ENCODE measurements at regions of chr15 and their contacts with region 1.

Region 1: GRCh38 chr15:78108299-78109084 is 16.1 kb downstream of the SH2D7 start:
- DNase-seq: peak; percentile 75 to 89 (median 77)
- H3K4me3 ChIP-seq: no peak overlapping the region
- H3K4me3 Mint-ChIP-seq: no peak overlapping the region
- H3K27ac ChIP-seq: no peak overlapping the region
- H3K27ac Mint-ChIP-seq: peak overlapping the region in 4 of 8 donors; percentile 31 to 86 (median 55)
- H3K4me1 ChIP-seq: peaks cover 32% of the 10 kb centered on the region
- H3K4me1 Mint-ChIP-seq: peaks cover 34 to 45% (median 34%) of the 10 kb centered on the region in 3 donors
- H3K27me3 ChIP-seq: no peaks in the 10 kb centered on the region
- H3K27me3 Mint-ChIP-seq: peaks cover 0 to 3% of the 10 kb centered on the region in 2 donors

Region 2: GRCh38 chr15:77966540-77967290 is 141.8 kb before region 1 on chr15:
- CTCF ChIA-PET with region 1: interaction called, 146 read pairs
- POLR2A ChIA-PET with region 1: no interaction called
- DNase-seq: peak; percentile 30 to 67 (median 39)
- H3K4me3 ChIP-seq: no peak overlapping the region
- H3K4me3 Mint-ChIP-seq: no peak overlapping the region
- H3K27ac ChIP-seq: no peak overlapping the region
- H3K27ac Mint-ChIP-seq: no peak overlapping the region
- H3K4me1 ChIP-seq: no peaks in the 10 kb centered on the region
- H3K4me1 Mint-ChIP-seq: no peaks in the 10 kb centered on the region
- H3K27me3 ChIP-seq: no peaks in the 10 kb centered on the region
- H3K27me3 Mint-ChIP-seq: peaks cover 0 to 3% of the 10 kb centered on the region in 2 donors

Region 3: DNA sequence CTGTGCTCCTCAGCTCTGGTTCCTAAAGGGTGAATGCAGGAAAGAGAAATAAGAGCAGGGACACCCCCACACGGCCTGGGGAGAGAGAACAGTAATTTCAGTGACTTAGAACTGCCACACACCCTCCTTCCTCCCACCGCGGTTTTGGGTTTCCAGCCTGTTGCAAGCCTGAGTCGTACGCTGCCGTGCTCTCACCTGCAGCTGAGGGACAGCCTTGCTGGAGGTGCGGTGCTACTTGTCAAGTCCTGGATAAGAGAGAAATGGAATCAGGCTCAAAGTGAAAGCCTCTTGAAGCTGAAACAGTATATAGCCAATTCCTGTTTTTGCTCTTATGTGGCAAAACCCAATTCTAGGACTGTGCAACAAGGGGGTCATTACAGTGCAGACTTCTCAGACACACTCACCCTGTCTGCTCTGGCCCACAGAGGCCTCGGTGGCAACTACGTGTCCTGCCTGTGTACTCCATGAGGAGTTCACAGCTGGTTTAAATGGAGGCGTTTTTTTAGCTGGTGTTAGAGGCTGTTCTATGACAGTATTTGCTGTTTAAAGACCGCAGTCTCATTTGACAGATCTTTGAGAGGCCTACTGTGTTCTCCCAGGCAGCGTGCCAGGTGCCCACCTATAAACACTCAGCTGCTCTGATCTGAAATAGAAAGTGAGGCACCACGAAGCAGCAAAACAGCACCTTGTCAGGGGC is 73.8 kb before region 1 on chr15:
- CTCF ChIA-PET with region 1: interaction called, 31 read pairs
- POLR2A ChIA-PET with region 1: interaction called, 4 read pairs
- DNase-seq: peak; percentile 63 to 90 (median 78)
- H3K4me3 ChIP-seq: peak overlapping the region; percentile 38
- H3K4me3 Mint-ChIP-seq: peak overlapping the region; percentile 57 to 84 (median 78)
- H3K27ac ChIP-seq: peak overlapping the region; percentile 75
- H3K27ac Mint-ChIP-seq: peak overlapping the region; percentile 73 to 99 (median 96)
- H3K4me1 ChIP-seq: peaks cover 64% of the 10 kb centered on the region
- H3K4me1 Mint-ChIP-seq: peaks cover 84 to 95% (median 88%) of the 10 kb centered on the region in 3 donors
- H3K27me3 ChIP-seq: no peaks in the 10 kb centered on the region
- H3K27me3 Mint-ChIP-seq: peaks cover 0 to 2% of the 10 kb centered on the region in 2 donors

Region 4: GRCh38 chr15:78093242-78094020 is 15.1 kb before region 1 on chr15:
- CTCF ChIA-PET with region 1: interaction called, 10 read pairs
- POLR2A ChIA-PET with region 1: no interaction called
- DNase-seq: peak in 1 of 5 donors; percentile 14
- H3K4me3 ChIP-seq: no peak overlapping the region
- H3K4me3 Mint-ChIP-seq: no peak overlapping the region
- H3K27ac ChIP-seq: no peak overlapping the region
- H3K27ac Mint-ChIP-seq: no peak overlapping the region
- H3K4me1 ChIP-seq: no peaks in the 10 kb centered on the region
- H3K4me1 Mint-ChIP-seq: peaks cover 0 to 19% (median 0%) of the 10 kb centered on the region in 3 donors
- H3K27me3 ChIP-seq: no peaks in the 10 kb centered on the region
- H3K27me3 Mint-ChIP-seq: peaks cover 0 to 6% of the 10 kb centered on the region in 2 donors

Region 5: GRCh38 chr15:78167227-78167888 is 58.9 kb after region 1 on chr15:
- CTCF ChIA-PET with region 1: no interaction called
- POLR2A ChIA-PET with region 1: no interaction called
- DNase-seq: peak in 1 of 5 donors; percentile 13
- H3K4me3 ChIP-seq: no peak overlapping the region
- H3K4me3 Mint-ChIP-seq: peak overlapping the region; percentile 2 to 48 (median 32)
- H3K27ac ChIP-seq: no peak overlapping the region
- H3K27ac Mint-ChIP-seq: peak overlapping the region in 5 of 8 donors; percentile 6 to 59 (median 26)
- H3K4me1 ChIP-seq: peaks cover 13% of the 10 kb centered on the region
- H3K4me1 Mint-ChIP-seq: peaks cover 12 to 17% (median 15%) of the 10 kb centered on the region in 3 donors
- H3K27me3 ChIP-seq: no peaks in the 10 kb centered on the region
- H3K27me3 Mint-ChIP-seq: no peaks in the 10 kb centered on the region

Region 6: GRCh38 chr15:78177447-78177873 is 69.0 kb after region 1 on chr15:
- CTCF ChIA-PET with region 1: no interaction called
- POLR2A ChIA-PET with region 1: no interaction called
- DNase-seq: peak in 2 of 5 donors; percentile 16 to 56
- H3K4me3 ChIP-seq: no peak overlapping the region
- H3K4me3 Mint-ChIP-seq: no peak overlapping the region
- H3K27ac ChIP-seq: no peak overlapping the region
- H3K27ac Mint-ChIP-seq: no peak overlapping the region
- H3K4me1 ChIP-seq: peaks cover 16% of the 10 kb centered on the region
- H3K4me1 Mint-ChIP-seq: peaks cover 19 to 23% (median 20%) of the 10 kb centered on the region in 3 donors
- H3K27me3 ChIP-seq: no peaks in the 10 kb centered on the region
- H3K27me3 Mint-ChIP-seq: no peaks in the 10 kb centered on the region

Region 7: GRCh38 chr15:78195735-78196201 is 87.3 kb after region 1 on chr15:
- CTCF ChIA-PET with region 1: interaction called, 101 read pairs
- POLR2A ChIA-PET with region 1: no interaction called
- DNase-seq: peak; percentile 8 to 56 (median 46)
- H3K4me3 ChIP-seq: no peak overlapping the region
- H3K4me3 Mint-ChIP-seq: no peak overlapping the region
- H3K27ac ChIP-seq: no peak overlapping the region
- H3K27ac Mint-ChIP-seq: peak overlapping the region in 2 of 8 donors; percentile 6 to 67
- H3K4me1 ChIP-seq: no peaks in the 10 kb centered on the region
- H3K4me1 Mint-ChIP-seq: no peaks in the 10 kb centered on the region
- H3K27me3 ChIP-seq: no peaks in the 10 kb centered on the region
- H3K27me3 Mint-ChIP-seq: no peaks in the 10 kb centered on the region

Region 8: DNA sequence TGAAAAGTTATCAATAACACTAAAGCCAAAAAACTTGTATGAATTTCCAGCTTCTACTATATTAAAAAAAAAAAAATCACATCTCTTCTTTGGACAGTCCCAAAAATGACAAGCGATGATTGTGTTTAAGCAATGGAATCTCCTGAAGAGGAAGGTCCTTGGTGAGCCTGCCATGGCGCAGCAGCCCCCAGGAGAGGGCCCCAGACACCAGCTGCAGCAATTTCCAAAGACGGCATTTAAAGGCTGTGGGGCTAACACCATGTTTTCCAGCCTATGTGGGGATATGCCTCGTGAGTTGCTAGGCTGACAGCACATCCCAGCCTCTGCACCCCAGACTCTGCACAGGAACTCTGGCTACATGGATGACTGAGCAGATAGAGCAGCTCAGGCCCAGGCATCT is 176.3 kb after region 1 on chr15:
- CTCF ChIA-PET with region 1: no interaction called
- POLR2A ChIA-PET with region 1: no interaction called
- DNase-seq: no peak
- H3K4me3 ChIP-seq: no peak overlapping the region
- H3K4me3 Mint-ChIP-seq: no peak overlapping the region
- H3K27ac ChIP-seq: no peak overlapping the region
- H3K27ac Mint-ChIP-seq: no peak overlapping the region
- H3K4me1 ChIP-seq: no peaks in the 10 kb centered on the region
- H3K4me1 Mint-ChIP-seq: peaks cover 0 to 7% (median 5%) of the 10 kb centered on the region in 3 donors
- H3K27me3 ChIP-seq: no peaks in the 10 kb centered on the region
- H3K27me3 Mint-ChIP-seq: peaks cover 0 to 2% of the 10 kb centered on the region in 2 donors

Measured in CD8-positive, alpha-beta memory T cell (primary cell).